HCT116 (cell line): ENCODE measurements at regions of chr2 and their contacts with region 1.

Region 1: GRCh38 chr2:196750982-196751635 is 48.4 kb downstream of the GTF3C3 start:
- DNase-seq: peak; percentile 51
- ATAC-seq: peak; percentile 98
- H3K4me3 ChIP-seq: no peak overlapping the region
- H3K27ac ChIP-seq: no peak overlapping the region
- H3K4me1 ChIP-seq: no peaks in the 10 kb centered on the region
- H3K27me3 ChIP-seq: no peaks in the 10 kb centered on the region
- CTCF ChIP-seq: peak; percentile 76 to 90 (median 90); a peak in 5 of 6 replicates
- POLR2A ChIP-seq: no peak
- RAD21 ChIP-seq: peak; percentile 59

Region 2: DNA sequence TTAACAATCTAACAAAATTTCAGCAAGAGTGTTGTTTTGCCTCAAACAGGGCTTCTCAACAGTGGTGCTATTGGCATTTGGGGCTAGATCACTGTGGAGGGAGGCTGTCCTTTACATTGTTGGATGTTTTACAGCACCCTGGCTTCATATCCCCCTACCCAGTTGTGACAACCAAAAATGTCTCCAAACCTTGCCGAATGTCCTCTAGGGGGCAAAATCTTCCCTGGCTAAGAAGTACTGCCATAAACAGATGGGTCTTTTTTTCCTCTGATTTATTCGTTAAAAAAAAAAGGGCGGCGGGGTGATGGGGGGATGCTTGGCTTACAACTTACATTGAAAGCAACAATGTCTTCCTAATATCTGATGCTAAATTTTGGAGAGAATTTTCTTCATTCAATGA is 319.2 kb before region 1 on chr2:
- CTCF ChIA-PET with region 1: interaction called, 3 read pairs
- POLR2A ChIA-PET with region 1: no interaction called
- RAD21 ChIA-PET with region 1: no interaction called
- intact Hi-C with region 1: loop called (anchors 10 kb)
- DNase-seq: peak; percentile 32
- ATAC-seq: peak; percentile 80
- H3K4me3 ChIP-seq: no peak overlapping the region
- H3K27ac ChIP-seq: no peak overlapping the region
- H3K4me1 ChIP-seq: no peaks in the 10 kb centered on the region
- H3K27me3 ChIP-seq: no peaks in the 10 kb centered on the region
- CTCF ChIP-seq: peak; percentile 33 to 70 (median 69); a peak in 5 of 6 replicates
- POLR2A ChIP-seq: no peak
- RAD21 ChIP-seq: peak; percentile 58

Region 3: DNA sequence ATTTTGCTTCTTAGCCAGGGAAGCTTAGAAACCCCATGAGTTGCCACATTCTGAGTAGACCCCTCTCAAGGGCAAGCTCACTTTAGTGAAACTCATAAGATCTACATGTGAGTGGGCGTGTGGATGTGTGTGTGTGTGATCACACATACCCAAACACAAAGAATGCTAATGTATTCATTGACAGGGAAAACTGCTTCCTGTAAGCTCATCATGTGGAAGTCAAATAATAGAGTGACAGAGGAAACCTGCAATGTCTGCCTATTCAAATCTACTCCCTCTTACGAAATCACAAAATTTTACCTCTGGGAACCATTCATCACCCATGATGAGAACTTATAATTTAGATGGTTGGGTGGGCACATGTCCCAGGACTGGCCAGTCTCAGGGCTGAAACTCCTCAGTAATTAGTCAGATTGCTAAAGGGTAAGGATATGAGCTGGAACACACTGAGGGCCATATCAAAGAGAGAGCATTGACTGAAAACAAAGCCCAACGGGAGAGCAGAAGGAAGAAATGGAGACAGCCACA is 206.1 kb before region 1 on chr2:
- CTCF ChIA-PET with region 1: no interaction called
- POLR2A ChIA-PET with region 1: no interaction called
- RAD21 ChIA-PET with region 1: no interaction called
- intact Hi-C with region 1: no loop called
- DNase-seq: no peak
- ATAC-seq: no peak
- H3K4me3 ChIP-seq: no peak overlapping the region
- H3K27ac ChIP-seq: no peak overlapping the region
- H3K4me1 ChIP-seq: no peaks in the 10 kb centered on the region
- H3K27me3 ChIP-seq: no peaks in the 10 kb centered on the region
- CTCF ChIP-seq: no peak
- POLR2A ChIP-seq: no peak
- RAD21 ChIP-seq: no peak

Region 4: GRCh38 chr2:196729418-196729817 is 21.7 kb before region 1 on chr2:
- CTCF ChIA-PET with region 1: interaction called, 11 read pairs
- POLR2A ChIA-PET with region 1: no interaction called
- RAD21 ChIA-PET with region 1: no interaction called
- intact Hi-C with region 1: no loop called
- DNase-seq: no peak
- ATAC-seq: no peak
- H3K4me3 ChIP-seq: no peak overlapping the region
- H3K27ac ChIP-seq: no peak overlapping the region
- H3K4me1 ChIP-seq: no peaks in the 10 kb centered on the region
- H3K27me3 ChIP-seq: no peaks in the 10 kb centered on the region
- CTCF ChIP-seq: no peak
- POLR2A ChIP-seq: no peak
- RAD21 ChIP-seq: no peak